ENCODE measurements at regions of chr1 and their contacts with region 1.

Region 1: GRCh38 chr1:155934097-155934935 is at the start of gene KHDC4:
- DNase-seq: peak; percentile 96 to 99
- H3K4me3 ChIP-seq: peak within 1 kb of the TSS; percentile 86
- H3K4me1 ChIP-seq: peaks cover 21% of the 10 kb centered on the region
- H3K27me3 ChIP-seq: no peaks in the 10 kb centered on the region

Region 2: GRCh38 chr1:156054500-156055280 is 120.4 kb after region 1 on chr1 and contains the start of gene LAMTOR2:
- in situ Hi-C with region 1: loop called (anchors 10 kb)
- DNase-seq: peak; percentile 98 to 99
- H3K4me3 ChIP-seq: peak within 1 kb of the TSS; percentile 98
- H3K4me1 ChIP-seq: no peaks in the 10 kb centered on the region
- H3K27me3 ChIP-seq: no peaks in the 10 kb centered on the region

Measured in HAP-1 (cell line).